AG04449 (cell line): ENCODE measurements at regions of chr22 and their contacts with region 1.

Region 1: DNA sequence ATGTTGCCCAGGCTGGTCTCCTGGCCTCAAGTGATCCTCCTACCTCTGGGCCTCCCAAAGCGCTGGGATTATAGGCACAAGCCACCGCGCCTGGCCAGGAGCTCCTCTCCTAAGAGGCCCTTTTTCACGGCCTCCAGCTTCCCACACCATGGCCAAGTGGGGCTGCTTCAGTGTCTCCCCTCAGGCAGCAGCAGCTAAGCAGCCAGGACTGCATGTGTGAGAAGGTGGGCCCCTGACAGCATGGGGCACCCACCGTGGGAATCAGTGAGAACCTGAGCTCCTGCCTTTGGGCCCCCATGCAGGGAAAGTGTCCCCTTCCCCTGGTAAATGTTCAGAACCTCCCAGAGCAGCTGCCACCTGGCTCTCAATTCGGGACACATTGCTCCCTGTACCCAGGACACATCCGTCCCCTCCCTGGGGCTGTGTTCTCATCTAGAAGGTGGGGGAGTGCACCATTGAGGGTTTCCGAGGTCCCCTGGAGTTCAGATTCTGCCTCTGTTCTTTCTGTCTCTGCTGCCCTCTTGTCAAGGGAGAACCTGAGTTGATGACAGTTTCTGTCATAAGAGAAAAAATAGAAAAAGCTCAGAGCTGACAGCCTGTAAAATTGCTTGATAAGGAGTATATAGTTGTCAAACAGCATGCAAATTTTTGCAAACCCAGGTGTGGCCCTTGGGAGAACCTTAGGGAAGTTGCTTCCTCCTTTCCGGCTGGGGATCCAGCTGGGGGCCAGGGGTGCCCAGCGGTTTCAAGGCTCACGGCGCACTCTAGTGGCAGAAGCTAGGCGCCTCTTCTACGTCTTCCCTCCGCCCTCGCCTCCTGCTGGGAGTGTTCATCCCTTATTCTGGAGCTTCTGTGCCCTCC is 29.7 kb downstream of the FAM83F start:
- DNase-seq: no peak
- H3K4me3 ChIP-seq: no peak overlapping the region
- CTCF ChIP-seq: peak; percentile 96

Region 2: GRCh38 chr22:39496131-39496838 is 528.1 kb before region 1 on chr22:
- CTCF ChIA-PET with region 1: interaction called, 13 read pairs
- POLR2A ChIA-PET with region 1: no interaction called
- DNase-seq: no peak
- H3K4me3 ChIP-seq: no peak overlapping the region
- CTCF ChIP-seq: peak; percentile 81

Region 3: DNA sequence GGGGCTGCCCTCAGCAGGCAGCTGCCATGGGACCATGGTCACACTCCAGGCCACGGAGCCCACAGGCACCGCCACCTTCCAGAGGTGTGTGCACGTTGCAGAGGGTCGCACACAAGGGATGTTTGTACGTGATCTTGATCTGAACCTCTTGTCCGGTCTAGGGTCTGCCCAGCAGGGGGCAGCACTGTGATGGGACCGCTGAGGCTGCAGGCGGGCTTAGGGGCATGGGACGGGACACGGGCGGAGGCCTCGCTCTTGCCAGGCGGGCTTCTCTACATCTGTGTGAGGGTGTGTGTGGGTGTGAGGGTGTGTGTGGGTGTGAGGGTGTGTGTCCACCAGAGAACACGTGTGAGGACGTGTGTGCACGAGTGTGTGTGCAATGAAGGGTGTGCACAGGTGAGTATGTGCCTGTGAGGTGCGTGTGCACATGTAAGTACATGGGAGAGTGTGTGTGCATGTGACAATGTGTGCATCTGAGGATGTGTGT is 401.5 kb before region 1 on chr22:
- CTCF ChIA-PET with region 1: interaction called, 20 read pairs
- POLR2A ChIA-PET with region 1: no interaction called
- DNase-seq: no peak
- H3K4me3 ChIP-seq: no peak overlapping the region
- CTCF ChIP-seq: peak; percentile 46

Region 4: DNA sequence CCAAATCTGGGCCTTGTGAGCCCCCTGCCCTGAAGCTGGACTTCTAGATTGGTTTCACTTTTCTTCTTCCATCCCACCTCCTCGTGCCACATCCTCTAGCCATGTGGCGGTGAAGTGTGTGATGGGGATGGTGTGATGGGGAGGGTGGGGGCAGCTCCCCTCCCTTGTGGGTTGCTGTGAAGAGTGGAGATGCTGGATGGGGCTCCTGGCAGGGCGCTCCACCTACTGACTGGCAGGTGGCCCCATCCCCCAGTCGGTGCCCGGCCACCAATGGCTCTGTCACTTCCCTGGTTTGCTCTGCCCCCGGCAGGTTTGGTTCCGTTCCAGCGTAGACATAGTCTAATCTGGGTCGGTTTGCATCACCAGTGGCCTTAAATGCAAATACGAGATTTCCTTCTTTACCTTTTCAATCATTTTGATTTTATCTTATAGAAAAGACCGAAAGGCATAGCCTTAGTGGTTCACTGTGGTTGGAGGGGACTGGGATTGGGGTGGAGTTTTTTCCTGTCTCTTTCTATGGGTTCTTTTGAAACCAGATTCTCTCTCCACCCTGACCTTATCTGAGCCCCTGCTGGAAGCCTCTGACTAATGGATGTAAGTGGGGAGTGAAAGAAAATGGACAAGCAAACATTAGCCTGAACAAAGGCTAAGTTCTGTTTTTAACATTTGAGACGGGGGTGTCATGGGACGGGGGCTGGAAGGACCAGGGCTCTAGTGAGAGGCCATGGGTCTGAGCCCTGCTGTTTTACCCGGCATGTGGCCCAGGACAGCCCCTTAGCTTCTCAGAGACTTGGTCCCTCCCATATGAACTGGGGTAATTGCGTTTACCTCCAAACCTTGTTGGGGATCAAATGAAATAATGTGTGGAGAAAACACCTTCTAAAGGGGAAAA is 304.6 kb before region 1 on chr22:
- CTCF ChIA-PET with region 1: no interaction called
- POLR2A ChIA-PET with region 1: no interaction called
- DNase-seq: no peak
- H3K4me3 ChIP-seq: no peak overlapping the region
- CTCF ChIP-seq: no peak

Region 5: GRCh38 chr22:39965748-39966147 is 58.7 kb before region 1 on chr22:
- CTCF ChIA-PET with region 1: interaction called, 12 read pairs
- POLR2A ChIA-PET with region 1: no interaction called
- DNase-seq: no peak
- H3K4me3 ChIP-seq: no peak overlapping the region
- CTCF ChIP-seq: no peak

Region 6: DNA sequence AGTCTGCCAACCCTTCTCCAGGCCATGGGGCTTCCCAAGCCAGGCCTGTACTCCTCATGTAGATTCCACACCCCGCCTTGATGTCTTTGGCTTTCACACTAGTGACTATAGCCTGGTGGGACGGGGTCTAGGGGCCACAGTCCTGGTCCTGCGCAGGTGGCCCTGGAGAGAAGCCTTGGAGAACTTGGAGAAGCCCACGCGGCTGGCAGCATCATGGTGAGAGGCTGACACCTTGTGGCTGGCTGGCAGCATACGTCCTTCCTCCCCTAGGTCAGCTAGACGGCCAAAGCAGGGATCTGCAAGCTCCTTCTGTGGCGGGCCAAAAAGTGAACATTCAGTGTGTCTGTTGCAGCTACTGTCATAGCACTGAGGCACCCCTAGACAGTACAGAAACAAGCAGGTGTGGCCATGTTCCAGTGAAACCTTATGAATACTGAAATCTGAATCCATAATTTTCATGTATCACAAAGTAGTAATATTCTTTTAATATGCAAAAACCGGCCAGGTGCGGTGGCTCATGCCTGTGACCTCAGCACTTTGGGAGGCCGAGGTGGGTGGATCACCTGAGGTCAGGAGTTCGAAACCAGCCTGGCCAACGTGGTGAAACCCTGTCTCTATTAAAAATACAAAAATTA is 12.3 kb after region 1 on chr22:
- CTCF ChIA-PET with region 1: interaction called, 136 read pairs
- POLR2A ChIA-PET with region 1: no interaction called
- DNase-seq: no peak
- H3K4me3 ChIP-seq: no peak overlapping the region
- CTCF ChIP-seq: peak; percentile 90

Region 7: DNA sequence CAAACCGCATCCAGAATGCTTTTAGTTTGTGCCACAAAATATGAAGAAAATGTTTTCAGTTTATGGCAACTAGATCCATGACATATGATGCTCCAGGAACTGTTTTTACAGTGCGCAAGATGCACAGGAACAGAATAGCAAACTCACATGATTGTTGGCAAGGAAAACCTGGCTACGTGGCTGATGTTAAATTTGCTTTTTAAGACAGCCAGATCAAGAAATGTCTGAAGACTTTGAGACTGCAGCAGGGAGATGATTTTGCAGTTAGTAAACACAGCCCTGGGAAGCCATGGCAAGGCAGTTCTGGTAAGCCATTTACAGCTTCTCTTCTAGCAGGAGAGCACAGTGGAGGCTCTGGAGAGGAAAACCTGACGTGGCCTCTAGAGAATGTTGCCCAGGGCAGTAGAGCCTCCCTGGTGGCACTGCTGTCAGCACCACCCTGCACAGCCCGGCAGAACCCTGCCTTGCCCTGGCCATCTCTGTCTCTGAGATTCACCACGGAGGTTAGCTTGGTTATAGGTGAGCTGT is 83.5 kb after region 1 on chr22:
- CTCF ChIA-PET with region 1: no interaction called
- POLR2A ChIA-PET with region 1: no interaction called
- DNase-seq: no peak
- H3K4me3 ChIP-seq: no peak overlapping the region
- CTCF ChIP-seq: no peak

Region 8: GRCh38 chr22:40326905-40327735 is 302.7 kb after region 1 on chr22:
- CTCF ChIA-PET with region 1: no interaction called
- POLR2A ChIA-PET with region 1: no interaction called
- DNase-seq: no peak
- H3K4me3 ChIP-seq: no peak overlapping the region
- CTCF ChIP-seq: no peak